Endothelial cell of umbilical vein (primary cell): ENCODE measurements at regions of chr2 and their contacts with region 1.

Region 1: DNA sequence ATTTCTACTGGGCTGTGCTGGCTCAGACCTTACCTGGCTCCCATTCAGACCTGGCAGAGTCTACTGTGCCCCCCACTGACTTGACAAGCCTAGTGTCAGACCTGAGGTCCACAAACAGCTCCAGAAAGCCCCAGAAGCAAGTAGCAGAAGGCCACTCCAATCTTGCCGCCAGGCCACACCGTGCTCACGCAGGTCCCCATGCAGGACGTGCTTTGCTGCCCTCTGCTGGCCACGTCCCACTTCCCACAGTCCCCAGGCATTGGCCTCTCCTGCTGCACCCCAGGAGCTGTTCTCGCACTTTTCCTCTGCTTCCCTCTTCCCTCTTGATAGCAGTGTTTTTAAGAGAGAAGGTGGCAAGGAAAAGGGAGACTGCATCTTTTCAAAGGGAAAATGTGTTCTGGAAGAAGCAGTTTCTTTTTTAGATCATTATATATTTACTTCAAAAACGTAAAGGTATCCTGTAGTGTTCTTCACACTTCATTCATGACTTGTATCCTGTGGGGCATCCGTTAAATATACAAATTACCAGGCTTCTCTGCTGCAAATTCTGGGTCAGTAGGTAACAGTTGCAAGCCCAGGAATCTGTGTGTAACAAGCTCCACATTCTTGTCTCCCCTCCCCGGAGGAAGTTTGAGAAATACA is 81.4 kb upstream of the PAPOLG start:
- DNase-seq: peak; percentile 64
- H3K4me3 ChIP-seq: no peak overlapping the region
- H3K27ac ChIP-seq: no peak overlapping the region
- H3K4me1 ChIP-seq: no peaks in the 10 kb centered on the region
- H3K27me3 ChIP-seq: peaks cover 0 to 4% of the 10 kb centered on the region in 2 experiments
- CTCF ChIP-seq: peak; percentile 87 to 92
- POLR2A ChIP-seq: no peak

Region 2: GRCh38 chr2:60560734-60561644 is 113.7 kb before region 1 on chr2:
- CTCF ChIA-PET with region 1: interaction called, 13 read pairs
- POLR2A ChIA-PET with region 1: no interaction called
- dilution Hi-C with region 1: no loop called
- intact Hi-C with region 1: no loop called
- DNase-seq: no peak
- H3K4me3 ChIP-seq: no peak overlapping the region
- H3K27ac ChIP-seq: no peak overlapping the region
- H3K4me1 ChIP-seq: no peaks in the 10 kb centered on the region
- H3K27me3 ChIP-seq: peaks cover 24 to 52% of the 10 kb centered on the region in 2 experiments
- CTCF ChIP-seq: peak; percentile 41 to 42
- POLR2A ChIP-seq: no peak

Region 3: DNA sequence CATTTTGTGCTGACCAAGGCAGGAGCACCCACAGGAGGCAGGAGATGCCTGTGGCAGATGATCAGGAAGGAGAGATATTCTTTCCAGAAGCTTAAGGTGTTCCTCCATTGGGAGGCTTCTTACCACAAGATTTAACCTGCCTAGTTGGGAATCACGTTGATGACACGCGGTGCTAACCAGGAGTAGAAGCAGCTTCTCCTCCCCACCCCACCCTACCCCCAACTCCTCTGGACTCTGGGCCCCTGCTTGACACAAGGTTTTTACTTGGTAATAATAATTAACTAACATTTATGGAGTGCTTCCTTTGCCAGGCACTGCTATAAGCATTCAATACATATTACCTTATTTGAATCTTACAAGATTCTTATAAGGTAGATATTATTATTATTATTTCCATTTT is 18.9 kb after region 1 on chr2:
- CTCF ChIA-PET with region 1: interaction called, 24 read pairs
- POLR2A ChIA-PET with region 1: no interaction called
- dilution Hi-C with region 1: no loop called
- intact Hi-C with region 1: no loop called
- DNase-seq: no peak
- H3K4me3 ChIP-seq: no peak overlapping the region
- H3K27ac ChIP-seq: no peak overlapping the region
- H3K4me1 ChIP-seq: no peaks in the 10 kb centered on the region
- H3K27me3 ChIP-seq: peaks cover 0 to 4% of the 10 kb centered on the region in 2 experiments
- CTCF ChIP-seq: no peak
- POLR2A ChIP-seq: no peak

Region 4: GRCh38 chr2:60717691-60718090 is 43.0 kb after region 1 on chr2:
- CTCF ChIA-PET with region 1: no interaction called
- POLR2A ChIA-PET with region 1: no interaction called
- dilution Hi-C with region 1: no loop called
- intact Hi-C with region 1: no loop called
- DNase-seq: no peak
- H3K4me3 ChIP-seq: no peak overlapping the region
- H3K27ac ChIP-seq: no peak overlapping the region
- H3K4me1 ChIP-seq: no peaks in the 10 kb centered on the region
- H3K27me3 ChIP-seq: no peaks in the 10 kb centered on the region
- CTCF ChIP-seq: no peak
- POLR2A ChIP-seq: no peak